ENCODE measurements at regions of chr15 and their contacts with region 1.

Region 1: DNA sequence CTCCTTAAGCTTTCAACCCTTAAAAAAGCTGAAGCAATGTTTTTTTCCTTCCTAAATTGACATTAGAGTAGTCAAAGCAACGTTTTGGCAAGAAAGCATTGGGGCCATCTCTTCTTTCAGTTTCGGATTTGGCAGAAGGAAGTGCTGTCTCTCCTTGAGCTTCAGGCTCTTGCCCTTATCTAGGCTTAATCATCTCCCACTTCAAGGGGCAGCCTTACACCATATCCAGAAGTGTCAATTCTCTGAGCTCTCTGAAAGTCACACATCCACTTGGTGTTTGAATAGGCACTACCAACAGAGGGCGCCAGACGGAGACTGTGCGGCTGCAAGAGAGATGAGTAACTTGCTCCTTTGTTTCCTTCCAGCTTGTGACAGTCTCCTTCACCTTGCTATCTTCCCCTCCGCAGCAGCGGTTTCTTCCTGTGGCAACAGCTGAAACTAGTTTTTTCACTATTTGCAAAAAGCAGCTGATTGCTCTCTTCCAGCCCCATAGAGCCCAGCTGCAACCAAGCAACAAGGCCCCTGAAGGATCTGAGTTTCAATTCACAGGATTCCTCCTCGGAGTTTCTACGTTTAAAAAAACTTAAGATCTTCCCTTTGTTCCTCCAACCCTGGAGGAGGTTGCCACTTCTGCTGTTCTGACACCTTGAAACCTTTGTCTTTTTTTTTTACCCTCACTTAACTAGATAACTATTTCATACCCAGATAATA is 147.0 kb upstream of the SLCO3A1 start:
- DNase-seq: peak; percentile 81
- ATAC-seq: peak; percentile 89

Region 2: DNA sequence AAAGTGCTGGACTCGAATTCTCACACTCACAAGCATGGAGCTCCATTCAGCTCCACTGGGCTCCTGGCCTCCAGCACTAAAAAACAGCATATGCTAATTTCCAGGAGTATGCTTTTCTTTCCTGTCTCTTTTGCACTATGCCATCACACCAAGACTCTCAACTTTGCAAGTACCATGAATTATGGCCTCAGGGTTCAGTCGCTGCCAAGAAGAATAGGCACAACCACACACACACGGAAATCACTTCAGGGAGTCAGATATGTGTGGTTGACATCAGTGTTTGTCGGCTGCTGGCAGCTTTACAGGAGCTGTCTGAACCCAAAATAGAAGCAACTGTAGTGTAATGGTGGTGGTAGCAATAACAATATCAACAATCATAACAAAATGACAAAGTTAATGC is 157.9 kb before region 1 on chr15:
- intact Hi-C with region 1: loop called (anchors 10 kb)
- DNase-seq: peak; percentile 66
- ATAC-seq: peak; percentile 77